CD8-positive, alpha-beta T cell (primary cell): ENCODE measurements at regions of chr2 and their contacts with region 1.

Region 1: DNA sequence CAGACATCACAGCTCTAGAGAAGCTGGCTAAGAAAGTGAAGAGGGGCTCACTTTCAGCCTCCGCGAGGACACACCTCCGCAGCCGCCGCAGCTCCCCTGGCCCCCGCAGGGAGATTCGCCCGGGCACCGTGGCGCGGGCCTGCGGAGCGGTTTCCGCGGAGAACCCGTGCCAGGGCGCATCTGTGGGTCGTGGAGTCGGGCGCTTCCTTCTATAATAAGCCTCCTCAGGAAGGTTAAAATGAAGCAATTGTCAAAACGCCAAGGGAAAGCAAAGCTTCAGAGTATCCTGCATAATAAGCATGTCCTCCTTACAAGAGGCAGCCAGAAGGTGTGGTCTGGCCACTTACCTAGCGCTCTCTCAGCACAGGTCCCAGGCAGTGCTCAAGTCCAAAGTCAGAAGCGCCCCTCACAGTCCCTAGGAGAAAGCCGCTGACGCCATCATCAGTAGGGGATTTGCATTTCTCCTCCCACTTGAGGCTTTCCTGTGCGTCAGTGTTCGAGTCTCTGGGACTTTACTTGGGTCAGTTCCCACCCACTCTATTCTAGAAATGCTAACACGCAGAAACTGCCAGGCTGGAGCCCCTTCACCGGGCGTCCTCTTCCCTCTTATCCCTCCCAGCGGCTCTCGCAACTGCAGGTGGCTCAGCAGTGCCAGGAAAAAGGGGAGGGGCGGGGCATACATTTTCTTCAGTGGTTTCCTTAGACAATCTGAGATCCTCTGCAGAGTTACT is at the start of gene STAT4:
- DNase-seq: peak; percentile 64 to 98 (median 82)
- ATAC-seq: peak; percentile 82
- H3K4me3 ChIP-seq: peak within 1 kb of the TSS; percentile 80 to 90
- H3K4me3 Mint-ChIP-seq: peak within 1 kb of the TSS; percentile 96
- H3K27ac ChIP-seq: peak within 1 kb of the TSS; percentile 93 to 98
- H3K27ac Mint-ChIP-seq: peak within 1 kb of the TSS; percentile 95
- H3K4me1 ChIP-seq: peaks cover 49% of the 10 kb centered on the region
- H3K4me1 Mint-ChIP-seq: peaks cover 54% of the 10 kb centered on the region
- H3K27me3 ChIP-seq: no peaks in the 10 kb centered on the region
- H3K27me3 Mint-ChIP-seq: no peaks in the 10 kb centered on the region
- CTCF ChIP-seq: no peak
- total RNA-seq, gene STAT4: 136 to 141 TPM

Region 2: DNA sequence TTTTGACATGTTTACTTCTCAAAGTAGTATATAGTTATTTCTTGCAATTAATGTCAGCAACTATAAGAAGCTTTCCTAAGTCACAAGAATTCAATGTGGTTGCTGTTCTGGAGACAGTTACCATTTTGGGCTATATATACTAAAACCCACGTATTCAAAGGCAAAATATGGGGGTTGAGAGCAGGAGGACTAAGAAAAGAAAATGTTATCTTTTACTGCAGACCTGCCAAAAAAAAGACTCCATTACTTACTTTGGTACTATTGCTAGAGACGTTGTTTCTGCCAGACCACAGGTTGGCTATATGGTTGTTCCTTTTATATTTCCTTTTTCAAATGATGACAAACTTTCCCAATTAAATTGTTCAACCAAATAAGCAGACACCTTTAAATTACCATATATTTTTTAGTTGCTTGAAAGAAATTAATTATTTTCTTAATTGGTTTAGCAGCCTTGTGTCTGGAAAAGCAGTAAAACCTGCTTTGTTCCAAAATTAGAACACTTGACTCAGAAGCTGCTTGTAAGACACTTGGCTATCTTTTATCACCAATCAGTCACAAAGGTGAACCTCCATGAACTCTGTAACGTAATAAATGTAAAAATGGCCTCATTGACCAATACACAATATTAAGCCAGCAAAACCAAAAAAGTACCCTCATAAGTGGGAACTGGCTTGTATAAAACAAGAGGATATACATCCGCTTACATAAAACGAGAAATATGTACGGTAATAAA is 1380.0 kb before region 1 on chr2:
- CTCF ChIA-PET with region 1: no interaction called
- POLR2A ChIA-PET with region 1: no interaction called
- intact Hi-C with region 1: no loop called
- DNase-seq: no peak
- ATAC-seq: no peak
- H3K4me3 ChIP-seq: no peak overlapping the region
- H3K4me3 Mint-ChIP-seq: no peak overlapping the region
- H3K27ac ChIP-seq: no peak overlapping the region
- H3K27ac Mint-ChIP-seq: no peak overlapping the region
- H3K4me1 ChIP-seq: no peaks in the 10 kb centered on the region
- H3K4me1 Mint-ChIP-seq: peaks cover 13% of the 10 kb centered on the region
- H3K27me3 ChIP-seq: no peaks in the 10 kb centered on the region
- H3K27me3 Mint-ChIP-seq: no peaks in the 10 kb centered on the region
- CTCF ChIP-seq: no peak

Region 3: GRCh38 chr2:190781604-190782198 is 369.1 kb before region 1 on chr2:
- CTCF ChIA-PET with region 1: interaction called, 6 read pairs
- POLR2A ChIA-PET with region 1: no interaction called
- intact Hi-C with region 1: loop called (anchors 5 kb)
- DNase-seq: peak in 8 of 9 experiments; percentile 6 to 74 (median 48)
- ATAC-seq: peak; percentile 63
- H3K4me3 ChIP-seq: no peak overlapping the region
- H3K4me3 Mint-ChIP-seq: no peak overlapping the region
- H3K27ac ChIP-seq: no peak overlapping the region
- H3K27ac Mint-ChIP-seq: no peak overlapping the region
- H3K4me1 ChIP-seq: no peaks in the 10 kb centered on the region
- H3K4me1 Mint-ChIP-seq: peaks cover 3% of the 10 kb centered on the region
- H3K27me3 ChIP-seq: no peaks in the 10 kb centered on the region
- H3K27me3 Mint-ChIP-seq: peaks cover 7% of the 10 kb centered on the region
- CTCF ChIP-seq: peak; percentile 70

Region 4: GRCh38 chr2:191038241-191038725 is 112.5 kb before region 1 on chr2:
- CTCF ChIA-PET with region 1: interaction called, 24 read pairs
- POLR2A ChIA-PET with region 1: no interaction called
- intact Hi-C with region 1: no loop called
- DNase-seq: peak in 4 of 9 experiments; percentile 34 to 78 (median 54)
- ATAC-seq: peak; percentile 74
- H3K4me3 ChIP-seq: no peak overlapping the region
- H3K4me3 Mint-ChIP-seq: no peak overlapping the region
- H3K27ac ChIP-seq: peak overlapping the region in 1 of 2 experiments; percentile 76
- H3K27ac Mint-ChIP-seq: peak overlapping the region; percentile 83
- H3K4me1 ChIP-seq: peaks cover 11% of the 10 kb centered on the region
- H3K4me1 Mint-ChIP-seq: peaks cover 28% of the 10 kb centered on the region
- H3K27me3 ChIP-seq: no peaks in the 10 kb centered on the region
- H3K27me3 Mint-ChIP-seq: no peaks in the 10 kb centered on the region
- CTCF ChIP-seq: no peak

Region 5: DNA sequence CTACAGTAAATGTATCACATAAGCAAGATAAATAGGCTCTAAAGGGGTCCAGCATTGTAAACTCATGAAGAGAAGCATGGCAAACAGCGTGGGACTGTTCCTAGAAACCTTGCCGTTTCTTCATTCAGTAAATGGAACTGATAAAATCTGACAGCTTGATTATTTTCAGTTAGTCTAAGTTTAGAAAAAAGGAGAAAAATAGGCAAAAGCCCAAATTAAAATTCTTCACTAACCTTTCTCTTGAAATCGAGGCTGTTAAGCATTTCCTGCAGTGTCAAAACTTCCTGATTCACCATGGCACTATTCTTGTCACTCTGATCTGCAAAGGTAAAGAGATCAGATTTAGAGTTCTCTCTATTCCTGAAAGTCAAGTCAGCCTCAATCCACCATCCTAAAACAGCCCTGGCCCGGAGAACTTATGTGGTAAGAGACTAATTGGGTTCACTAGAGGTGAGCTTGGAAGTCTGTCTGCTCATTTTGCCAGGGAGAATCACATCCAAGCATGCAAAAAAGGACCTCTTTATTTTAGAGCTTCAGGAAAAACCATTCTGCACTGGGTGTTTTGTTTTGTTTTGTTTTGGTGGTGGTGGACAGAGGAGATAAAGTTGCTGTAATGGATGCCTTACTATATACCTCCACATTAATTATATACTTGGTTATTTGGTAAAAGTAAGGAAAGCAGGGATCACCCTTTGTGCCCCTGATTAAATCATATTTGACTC is 84.4 kb before region 1 on chr2:
- CTCF ChIA-PET with region 1: interaction called, 39 read pairs
- POLR2A ChIA-PET with region 1: interaction called, 29 read pairs
- intact Hi-C with region 1: no loop called
- DNase-seq: peak in 1 of 9 experiments; percentile 46
- ATAC-seq: no peak
- H3K4me3 ChIP-seq: peak overlapping the region in 1 of 2 experiments; percentile 48
- H3K4me3 Mint-ChIP-seq: peak overlapping the region; percentile 75
- H3K27ac ChIP-seq: peak overlapping the region; percentile 4 to 62
- H3K27ac Mint-ChIP-seq: peak overlapping the region; percentile 86
- H3K4me1 ChIP-seq: peaks cover 76% of the 10 kb centered on the region
- H3K4me1 Mint-ChIP-seq: peaks cover 84% of the 10 kb centered on the region
- H3K27me3 ChIP-seq: no peaks in the 10 kb centered on the region
- H3K27me3 Mint-ChIP-seq: no peaks in the 10 kb centered on the region
- CTCF ChIP-seq: no peak

Region 6: GRCh38 chr2:191114403-191114886 is 36.3 kb before region 1 on chr2:
- CTCF ChIA-PET with region 1: interaction called, 12 read pairs
- POLR2A ChIA-PET with region 1: interaction called, 22 read pairs
- intact Hi-C with region 1: loop called (anchors 1 to 2 kb)
- DNase-seq: peak in 5 of 9 experiments; percentile 25 to 85 (median 58)
- ATAC-seq: peak; percentile 65
- H3K4me3 ChIP-seq: peak overlapping the region in 1 of 2 experiments; percentile 16
- H3K4me3 Mint-ChIP-seq: peak overlapping the region; percentile 71
- H3K27ac ChIP-seq: peak overlapping the region; percentile 47 to 96
- H3K27ac Mint-ChIP-seq: peak overlapping the region; percentile 96
- H3K4me1 ChIP-seq: peaks cover 38% of the 10 kb centered on the region
- H3K4me1 Mint-ChIP-seq: peaks cover 76% of the 10 kb centered on the region
- H3K27me3 ChIP-seq: no peaks in the 10 kb centered on the region
- H3K27me3 Mint-ChIP-seq: no peaks in the 10 kb centered on the region
- CTCF ChIP-seq: no peak

Region 7: GRCh38 chr2:191128172-191128910 is 22.4 kb before region 1 on chr2:
- CTCF ChIA-PET with region 1: interaction called, 21 read pairs
- POLR2A ChIA-PET with region 1: interaction called, 7 read pairs
- intact Hi-C with region 1: loop called (anchors 1 to 2 kb)
- DNase-seq: peak in 2 of 9 experiments; percentile 68 to 79
- ATAC-seq: peak; percentile 78
- H3K4me3 ChIP-seq: peak overlapping the region; percentile 0 to 31
- H3K4me3 Mint-ChIP-seq: peak overlapping the region; percentile 60
- H3K27ac ChIP-seq: peak overlapping the region; percentile 39 to 91
- H3K27ac Mint-ChIP-seq: peak overlapping the region; percentile 62
- H3K4me1 ChIP-seq: peaks cover 38% of the 10 kb centered on the region
- H3K4me1 Mint-ChIP-seq: peaks cover 70% of the 10 kb centered on the region
- H3K27me3 ChIP-seq: no peaks in the 10 kb centered on the region
- H3K27me3 Mint-ChIP-seq: no peaks in the 10 kb centered on the region
- CTCF ChIP-seq: no peak